AG04450 (cell line): ENCODE measurements at regions of chr14 and their contacts with region 1.

Region 1: GRCh38 chr14:85599939-85600338 is 70.0 kb downstream of the FLRT2 start:
- DNase-seq: no peak
- H3K4me3 ChIP-seq: no peak overlapping the region
- H3K27ac ChIP-seq: no peak overlapping the region
- H3K27me3 ChIP-seq: no peaks in the 10 kb centered on the region
- CTCF ChIP-seq: no peak

Region 2: GRCh38 chr14:85613496-85613895 is 13.6 kb after region 1 on chr14:
- CTCF ChIA-PET with region 1: interaction called, 23 read pairs
- POLR2A ChIA-PET with region 1: no interaction called
- DNase-seq: no peak
- H3K4me3 ChIP-seq: no peak overlapping the region
- H3K27ac ChIP-seq: no peak overlapping the region
- H3K27me3 ChIP-seq: no peaks in the 10 kb centered on the region
- CTCF ChIP-seq: no peak

Region 3: GRCh38 chr14:85688006-85688405 is 88.1 kb after region 1 on chr14:
- CTCF ChIA-PET with region 1: no interaction called
- POLR2A ChIA-PET with region 1: no interaction called
- DNase-seq: no peak
- H3K4me3 ChIP-seq: no peak overlapping the region
- H3K27ac ChIP-seq: no peak overlapping the region
- H3K27me3 ChIP-seq: no peaks in the 10 kb centered on the region
- CTCF ChIP-seq: no peak